ENCODE measurements at regions of chr10 and their contacts with region 1.

Region 1: GRCh38 chr10:96374985-96375830 is 16.4 kb upstream of the OPALIN start:
- DNase-seq: peak; percentile 80 to 91 (median 91)
- ATAC-seq: peak; percentile 99
- H3K4me3 ChIP-seq: no peak overlapping the region
- H3K4me1 ChIP-seq: no peaks in the 10 kb centered on the region
- CTCF ChIP-seq: peak; percentile 97

Region 2: DNA sequence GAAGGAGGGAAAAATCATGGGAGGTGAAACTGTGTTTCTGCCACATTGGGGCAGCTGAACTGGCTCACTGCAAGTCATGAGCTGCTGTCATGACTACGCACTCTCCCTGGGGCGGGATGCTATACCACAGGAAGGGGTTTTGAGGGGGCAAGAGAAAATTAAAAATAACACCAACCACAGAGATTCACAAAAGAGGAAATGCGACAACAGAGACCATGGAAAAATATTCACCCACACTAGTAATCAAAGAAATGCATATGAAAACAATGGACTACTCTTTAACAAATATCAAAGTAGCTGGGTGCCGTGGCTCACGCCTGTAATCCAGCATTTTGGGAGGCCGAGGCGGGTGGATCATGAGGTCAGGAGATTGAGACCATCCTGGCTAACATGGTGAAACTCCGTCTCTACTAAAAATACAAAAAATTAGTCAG is 276.8 kb after region 1 on chr10:
- intact Hi-C with region 1: no loop called
- DNase-seq: peak in 1 of 3 donors; percentile 37
- ATAC-seq: peak; percentile 72
- H3K4me3 ChIP-seq: no peak overlapping the region
- H3K4me1 ChIP-seq: no peaks in the 10 kb centered on the region
- CTCF ChIP-seq: no peak

Region 3: GRCh38 chr10:96673318-96674099 is 298.3 kb after region 1 on chr10:
- intact Hi-C with region 1: no loop called
- DNase-seq: peak in 2 of 3 donors; percentile 55 to 63
- ATAC-seq: peak; percentile 73
- H3K4me3 ChIP-seq: no peak overlapping the region
- H3K4me1 ChIP-seq: peaks cover 2% of the 10 kb centered on the region
- CTCF ChIP-seq: no peak

Region 4: DNA sequence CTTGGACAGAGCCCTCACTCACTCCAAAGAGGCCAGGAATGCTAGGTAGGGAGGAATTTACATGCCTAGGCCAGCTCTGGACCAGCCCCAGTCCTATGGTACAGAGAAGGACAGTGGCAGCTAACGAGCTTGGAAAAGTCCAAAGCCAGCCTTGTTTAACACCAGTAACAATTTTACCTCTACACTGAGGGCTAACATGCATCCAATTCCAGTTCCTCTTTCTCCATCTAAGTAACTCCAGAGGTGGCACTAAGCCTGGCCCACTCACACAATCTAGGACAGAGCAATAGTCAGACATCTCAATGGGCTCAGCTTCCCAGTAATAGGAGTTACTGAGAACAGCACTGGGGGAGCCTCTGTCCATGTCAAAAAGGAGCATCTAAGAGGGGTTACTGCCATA is 451.2 kb after region 1 on chr10:
- intact Hi-C with region 1: loop called in 1 of 2 experiments (anchors 10 kb)
- DNase-seq: no peak
- ATAC-seq: no peak
- H3K4me3 ChIP-seq: no peak overlapping the region
- H3K4me1 ChIP-seq: peaks cover 4% of the 10 kb centered on the region
- CTCF ChIP-seq: no peak

Measured in mucosa of descending colon (tissue), 3 donors.